ENCODE measurements at regions of chr9 and their contacts with region 1.

Region 1: DNA sequence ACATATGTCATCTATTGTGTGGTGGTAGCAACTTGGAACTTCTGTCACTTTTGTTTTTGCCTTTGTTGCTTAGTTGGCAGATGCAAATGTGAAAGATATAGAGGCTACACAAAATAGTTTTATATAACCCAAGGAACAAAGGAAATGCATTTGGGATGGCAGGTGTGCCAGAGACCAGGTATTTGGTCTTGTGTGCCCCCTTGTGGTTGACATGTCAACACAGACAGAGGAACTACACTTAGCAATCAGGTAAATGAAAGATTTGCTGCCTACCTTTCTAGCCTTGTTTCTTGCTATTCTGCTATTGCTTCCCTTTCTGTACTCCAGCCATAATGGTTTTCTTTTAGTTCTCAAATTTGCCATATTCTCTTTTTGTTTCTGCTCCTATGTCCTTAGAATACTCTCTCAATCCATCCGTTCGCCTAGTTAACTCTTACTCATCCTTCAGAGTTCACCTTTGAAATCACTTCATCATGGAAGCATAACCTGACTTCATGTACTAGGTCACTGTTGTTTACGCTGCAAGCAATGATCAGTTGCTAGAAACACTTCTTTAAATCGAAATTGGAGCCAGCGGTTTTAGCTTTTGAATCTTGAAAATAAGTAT is 119.5 kb downstream of the TRPM3 start:
- DNase-seq: peak; percentile 70
- H3K4me3 Mint-ChIP-seq: no peak overlapping the region
- H3K27ac Mint-ChIP-seq: no peak overlapping the region
- H3K4me1 Mint-ChIP-seq: no peaks in the 10 kb centered on the region
- H3K27me3 Mint-ChIP-seq: no peaks in the 10 kb centered on the region
- CTCF ChIP-seq: peak; percentile 47

Region 2: DNA sequence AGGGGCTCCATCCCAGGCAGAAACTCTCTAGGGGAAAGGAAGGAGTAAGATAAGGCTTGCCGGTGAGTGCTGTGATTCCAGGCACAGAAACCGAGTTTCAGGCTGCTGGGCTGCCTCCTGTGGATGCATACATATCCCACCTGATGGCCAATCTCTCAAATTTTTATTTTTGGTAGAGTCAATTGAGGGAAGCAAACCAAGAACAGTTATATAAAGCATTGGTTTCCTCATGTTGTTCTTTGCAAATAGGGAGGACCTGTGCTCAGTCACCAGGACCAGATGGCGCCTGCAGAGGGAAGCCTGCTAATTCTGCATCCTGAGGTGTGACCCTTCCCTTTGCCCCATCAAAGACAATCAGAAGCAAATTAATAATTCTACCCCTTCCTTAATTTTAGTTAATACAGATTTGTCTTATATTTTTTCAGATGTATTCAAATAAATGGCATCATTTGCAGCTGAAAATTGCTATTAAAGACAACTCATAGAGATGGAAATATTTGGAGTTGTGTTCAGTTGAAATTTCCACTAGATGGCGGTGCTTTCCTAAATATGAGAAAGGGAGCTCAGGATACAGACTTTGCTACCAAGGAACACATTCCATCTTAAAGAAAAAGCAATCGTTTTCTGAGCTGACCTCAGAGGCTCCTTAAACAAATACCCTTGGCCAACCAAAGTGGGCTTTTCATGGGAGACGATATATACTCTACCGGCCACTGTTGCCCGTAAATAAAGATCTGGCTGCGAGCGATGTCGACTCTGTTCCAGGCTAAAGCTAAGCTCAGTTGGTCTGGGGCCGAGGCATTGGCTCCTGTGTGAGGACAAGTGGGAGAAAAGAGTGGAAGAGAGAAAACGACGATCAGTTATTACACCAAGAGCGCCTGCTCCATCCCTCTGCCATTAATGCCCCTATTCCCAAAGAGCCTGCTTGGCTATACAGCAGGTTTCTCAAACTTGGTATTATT is 361.7 kb before region 1 on chr9:
- CTCF ChIA-PET with region 1: interaction called, 60 read pairs
- POLR2A ChIA-PET with region 1: no interaction called
- intact Hi-C with region 1: loop called (anchors 1 kb)
- DNase-seq: peak; percentile 64
- H3K4me3 Mint-ChIP-seq: no peak overlapping the region
- H3K27ac Mint-ChIP-seq: no peak overlapping the region
- H3K4me1 Mint-ChIP-seq: no peaks in the 10 kb centered on the region
- H3K27me3 Mint-ChIP-seq: peaks cover 18% of the 10 kb centered on the region
- CTCF ChIP-seq: peak; percentile 66

Region 3: DNA sequence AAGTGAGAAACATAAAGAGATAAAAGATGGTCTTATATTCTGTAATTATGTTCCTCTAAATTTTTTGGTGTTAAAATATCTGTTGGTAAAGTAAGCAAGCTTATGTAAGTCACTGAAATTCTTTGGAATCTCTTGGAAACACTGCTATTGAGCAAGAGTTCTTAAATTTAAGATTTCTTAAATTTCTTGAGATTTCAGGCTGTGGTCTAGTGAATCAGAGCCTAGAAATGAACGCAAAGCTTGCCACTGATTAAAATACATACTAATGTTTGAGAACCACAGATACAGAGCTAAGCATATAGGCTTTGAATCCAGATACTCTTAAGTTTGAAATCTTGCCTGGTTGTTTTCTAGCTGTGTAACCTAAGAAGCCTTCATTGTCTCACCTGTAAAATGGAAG is 13.9 kb before region 1 on chr9:
- CTCF ChIA-PET with region 1: interaction called, 17 read pairs
- POLR2A ChIA-PET with region 1: interaction called, 4 read pairs
- intact Hi-C with region 1: no loop called
- DNase-seq: peak; percentile 4
- H3K4me3 Mint-ChIP-seq: no peak overlapping the region
- H3K27ac Mint-ChIP-seq: no peak overlapping the region
- H3K4me1 Mint-ChIP-seq: no peaks in the 10 kb centered on the region
- H3K27me3 Mint-ChIP-seq: no peaks in the 10 kb centered on the region
- CTCF ChIP-seq: no peak

Measured in MCF 10A (cell line).